ENCODE measurements at regions of chr1 and their contacts with region 1.

Region 1: DNA sequence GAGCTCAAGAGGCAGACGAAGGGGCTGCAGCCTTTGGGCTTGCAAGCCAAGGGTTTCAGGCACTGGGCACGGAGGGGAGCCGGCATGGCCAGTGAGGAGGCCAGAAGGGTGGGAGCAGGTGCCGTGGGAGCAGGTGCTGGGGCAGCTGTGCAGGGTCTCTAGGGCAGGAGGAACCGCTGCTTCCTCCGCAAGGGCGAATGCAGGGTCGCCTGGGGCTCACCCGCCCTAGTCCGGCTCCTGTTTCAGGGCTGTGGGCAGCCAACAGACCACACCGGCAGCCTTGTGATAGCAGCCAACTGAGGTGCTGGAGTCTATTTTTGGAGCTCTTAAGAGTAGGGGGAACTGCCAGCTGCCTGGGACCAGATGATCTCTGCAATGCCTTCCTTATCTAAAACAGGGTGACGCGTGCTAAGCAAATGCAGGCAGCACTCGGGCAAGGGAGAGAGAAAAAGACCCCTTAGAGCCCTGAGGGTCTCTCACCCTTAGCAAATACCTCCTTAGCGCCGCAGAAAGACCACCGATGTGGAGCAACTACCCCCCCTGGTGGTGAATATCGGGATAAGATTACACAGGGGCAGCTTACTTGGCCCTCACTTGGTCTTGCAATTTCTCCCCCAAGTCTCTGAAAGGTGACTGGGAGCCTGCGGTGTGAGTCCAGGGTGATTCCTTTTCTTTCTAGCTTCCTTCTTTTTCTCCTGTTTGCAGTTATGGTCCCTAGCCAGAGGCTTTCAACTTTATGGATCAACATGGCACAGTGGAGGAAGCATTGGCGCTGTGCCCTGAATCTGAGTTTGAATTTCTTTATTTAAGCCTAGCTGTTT is 20.7 kb upstream of the MAPKAPK2 start:
- DNase-seq: peak; percentile 81 to 93 (median 91)
- H3K4me3 ChIP-seq: peak overlapping the region in 6 of 7 experiments; percentile 13 to 69 (median 59)
- H3K27ac ChIP-seq: no peak overlapping the region
- H3K4me1 ChIP-seq: peaks cover 14 to 49% (median 40%) of the 10 kb centered on the region in 4 experiments
- H3K27me3 ChIP-seq: peaks cover 0 to 8% (median 0%) of the 10 kb centered on the region in 5 experiments

Region 2: DNA sequence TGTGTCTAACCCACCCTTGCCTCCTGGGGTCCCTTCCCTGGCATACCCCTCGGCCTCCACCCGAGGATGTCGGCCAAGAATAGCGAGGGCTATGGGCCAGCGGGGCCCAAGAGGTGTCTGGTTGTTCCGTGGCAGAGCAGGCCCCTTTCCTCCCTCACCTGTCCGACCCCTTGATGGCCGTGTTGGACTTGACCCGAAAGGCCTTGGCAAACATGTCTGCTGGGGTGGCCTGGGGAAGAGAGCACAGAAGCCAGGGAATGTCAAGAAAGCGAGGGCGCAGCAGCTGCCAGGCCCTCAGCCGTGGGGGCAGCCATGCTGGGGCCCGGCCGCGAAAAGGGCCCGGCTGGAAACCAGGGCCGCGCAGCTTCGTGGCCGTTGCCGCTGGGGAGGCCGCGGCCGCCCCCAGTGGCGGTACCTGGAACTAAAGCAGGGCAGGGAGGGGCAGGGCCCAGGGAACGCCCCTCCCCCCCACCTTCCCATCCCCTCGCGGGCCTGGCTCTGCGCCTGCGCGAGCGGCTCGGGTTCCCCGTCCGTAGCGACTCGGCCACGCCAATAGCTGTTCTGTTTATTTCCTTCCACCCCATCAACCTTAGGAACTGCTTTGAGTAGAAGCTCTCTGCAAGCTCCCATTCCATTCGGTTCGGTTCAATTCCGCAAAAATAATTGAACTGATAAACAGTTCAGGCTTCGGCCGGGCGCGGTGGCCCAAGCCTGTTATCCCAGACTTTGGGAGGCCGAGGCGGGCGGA is 51.7 kb before region 1 on chr1 and contains the start of gene EIF2D:
- CTCF ChIA-PET with region 1: interaction called, 32 read pairs
- POLR2A ChIA-PET with region 1: no interaction called
- DNase-seq: peak; percentile 91 to 95 (median 94)
- H3K4me3 ChIP-seq: peak within 1 kb of the TSS; percentile 46 to 97 (median 89)
- H3K27ac ChIP-seq: peak within 1 kb of the TSS; percentile 96 to 98
- H3K4me1 ChIP-seq: peaks cover 6 to 30% (median 17%) of the 10 kb centered on the region in 4 experiments
- H3K27me3 ChIP-seq: no peaks in the 10 kb centered on the region

Region 3: DNA sequence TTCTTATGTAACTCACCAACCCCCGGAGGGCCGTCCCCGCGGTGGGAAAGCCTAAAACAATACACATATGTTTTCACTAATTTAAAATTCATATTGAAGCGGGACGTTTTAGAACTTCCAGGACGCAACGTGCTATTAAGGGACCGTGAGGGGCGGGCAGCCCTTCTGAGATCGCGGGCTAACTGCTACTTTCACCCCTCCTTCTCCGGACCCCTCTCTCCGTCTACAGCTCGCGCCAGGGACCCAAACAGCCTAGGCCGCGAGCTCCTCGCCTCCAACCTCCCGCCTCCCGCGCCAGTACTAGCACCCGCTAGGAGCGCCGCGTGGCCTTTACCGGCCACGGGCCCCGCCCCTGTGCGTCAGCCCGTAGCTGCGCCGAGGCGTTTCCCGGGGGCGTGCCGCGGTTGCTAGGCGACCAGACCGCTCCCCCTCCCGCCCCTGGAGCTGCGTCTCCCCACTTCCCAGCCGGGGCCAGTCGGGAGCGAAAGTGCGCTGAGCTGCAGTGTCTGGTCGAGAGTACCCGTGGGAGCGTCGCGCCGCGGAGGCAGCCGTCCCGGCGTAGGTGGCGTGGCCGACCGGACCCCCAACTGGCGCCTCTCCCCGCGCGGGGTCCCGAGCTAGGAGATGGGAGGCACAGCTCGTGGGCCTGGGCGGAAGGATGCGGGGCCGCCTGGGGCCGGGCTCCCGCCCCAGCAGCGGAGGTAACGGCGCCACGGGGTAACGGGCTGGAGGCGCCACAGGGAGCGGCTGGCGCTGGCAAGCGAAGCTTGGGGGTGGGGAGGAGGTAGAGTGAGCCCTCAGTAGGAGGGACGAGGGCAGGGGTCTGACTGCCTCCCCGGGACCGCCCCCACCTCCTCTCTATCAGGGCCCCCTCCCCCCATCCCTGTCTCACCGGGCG is 28.7 kb before region 1 on chr1 and contains the start of gene DYRK3:
- CTCF ChIA-PET with region 1: interaction called, 989 read pairs
- POLR2A ChIA-PET with region 1: interaction called, 17 read pairs
- DNase-seq: peak; percentile 91 to 93 (median 92)
- H3K4me3 ChIP-seq: peak within 1 kb of the TSS; percentile 76 to 98 (median 85)
- H3K27ac ChIP-seq: peak within 1 kb of the TSS; percentile 82 to 86
- H3K4me1 ChIP-seq: peaks cover 11 to 29% (median 22%) of the 10 kb centered on the region in 4 experiments
- H3K27me3 ChIP-seq: no peaks in the 10 kb centered on the region

Region 4: GRCh38 chr1:206674745-206675175 is 10.7 kb after region 1 on chr1:
- CTCF ChIA-PET with region 1: interaction called, 989 read pairs
- POLR2A ChIA-PET with region 1: interaction called, 3 read pairs
- DNase-seq: no peak
- H3K4me3 ChIP-seq: no peak overlapping the region
- H3K27ac ChIP-seq: no peak overlapping the region
- H3K4me1 ChIP-seq: peaks cover 10 to 31% (median 28%) of the 10 kb centered on the region in 4 experiments
- H3K27me3 ChIP-seq: no peaks in the 10 kb centered on the region

Region 5: GRCh38 chr1:206684478-206685333 is 20.7 kb after region 1 on chr1 and contains the start of gene MAPKAPK2:
- CTCF ChIA-PET with region 1: interaction called, 26 read pairs
- POLR2A ChIA-PET with region 1: no interaction called
- DNase-seq: peak; percentile 64 to 79 (median 78)
- H3K4me3 ChIP-seq: peak within 1 kb of the TSS; percentile 69 to 91 (median 77)
- H3K27ac ChIP-seq: peak within 1 kb of the TSS; percentile 72 to 85
- H3K4me1 ChIP-seq: peaks cover 11 to 37% (median 30%) of the 10 kb centered on the region in 4 experiments
- H3K27me3 ChIP-seq: peaks cover 0 to 5% (median 0%) of the 10 kb centered on the region in 5 experiments

Measured in common myeloid progenitor, CD34-positive (primary cell).